Dorsolateral prefrontal cortex (tissue), 120 donors: ENCODE measurements at regions of chr10 and their contacts with region 1.

Region 1: GRCh38 chr10:5813287-5814109 is at the start of gene GDI2:
- DNase-seq: peak; percentile 91 to 98 (median 95)
- H3K4me3 ChIP-seq: peak within 1 kb of the TSS; percentile 64 to 99 (median 91)
- H3K27ac ChIP-seq: peak within 1 kb of the TSS; percentile 83 to 99 (median 95)
- H3K27me3 ChIP-seq: no peaks in the 10 kb centered on the region
- CTCF ChIP-seq: peak in 35 of 56 donors; percentile 5 to 52 (median 28)
- total RNA-seq, gene GDI2: 73.4 to 149 (median 121) TPM

Region 2: GRCh38 chr10:5629303-5630111 is 184.0 kb before region 1 on chr10:
- intact Hi-C with region 1: no loop called
- DNase-seq: peak; percentile 37 to 82 (median 72)
- H3K4me3 ChIP-seq: no peak overlapping the region
- H3K27ac ChIP-seq: no peak overlapping the region
- H3K27me3 ChIP-seq: no peaks in the 10 kb centered on the region
- CTCF ChIP-seq: peak; percentile 56 to 91 (median 80)

Region 3: DNA sequence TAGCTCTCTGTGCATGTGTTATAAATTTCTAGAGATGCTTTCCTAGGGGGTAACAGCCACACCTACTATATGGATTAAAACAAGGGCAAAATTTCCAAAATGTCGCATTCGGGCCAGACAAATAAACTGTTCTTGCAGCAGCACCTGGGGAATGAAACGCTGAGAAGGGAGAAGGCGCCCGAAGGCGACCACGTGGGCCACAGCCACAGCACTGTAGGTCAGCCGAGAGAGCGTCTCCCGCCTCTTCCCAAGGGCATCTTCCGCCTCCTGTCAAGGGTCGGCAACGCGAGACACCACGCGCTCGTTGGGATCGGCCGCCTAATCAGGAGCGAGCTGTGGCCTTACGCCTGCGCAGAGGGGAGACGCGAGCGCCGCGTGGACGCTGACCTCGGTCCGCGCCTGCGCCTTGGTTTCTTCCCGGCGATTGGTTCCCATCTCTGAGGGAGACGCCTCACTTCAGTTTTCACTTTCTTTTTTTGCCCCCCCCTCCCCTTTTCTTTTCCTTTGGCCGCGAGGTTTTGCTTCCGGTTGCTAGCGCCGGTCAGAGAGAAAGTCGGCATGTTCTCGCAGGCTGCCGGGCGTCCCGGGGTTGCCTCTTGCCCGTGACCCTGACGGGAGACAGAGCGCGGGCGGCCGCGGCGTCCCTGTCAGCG is 129.1 kb before region 1 on chr10 and contains the start of gene TASOR2:
- intact Hi-C with region 1: loop called in 1 of 2 experiments (anchors 2 kb)
- DNase-seq: peak; percentile 92 to 98 (median 95)
- H3K4me3 ChIP-seq: peak within 1 kb of the TSS; percentile 55 to 98 (median 90)
- H3K27ac ChIP-seq: peak within 1 kb of the TSS; percentile 9 to 93 (median 83)
- H3K27me3 ChIP-seq: no peaks in the 10 kb centered on the region
- CTCF ChIP-seq: peak in 41 of 56 donors; percentile 3 to 67 (median 33)
- total RNA-seq, gene TASOR2: 41.9 to 87.9 (median 67.5) TPM

Region 4: GRCh38 chr10:5692461-5693358 is 120.8 kb before region 1 on chr10:
- intact Hi-C with region 1: loop called in 1 of 2 experiments (anchors 5 kb)
- DNase-seq: peak in 9 of 10 donors; percentile 19 to 61 (median 31)
- H3K4me3 ChIP-seq: peak overlapping the region; percentile 48 to 84 (median 69)
- H3K27ac ChIP-seq: peak overlapping the region in 45 of 59 donors; percentile 13 to 81 (median 56)
- H3K27me3 ChIP-seq: no peaks in the 10 kb centered on the region
- CTCF ChIP-seq: peak in 2 of 56 donors; percentile 12 to 15

Region 5: DNA sequence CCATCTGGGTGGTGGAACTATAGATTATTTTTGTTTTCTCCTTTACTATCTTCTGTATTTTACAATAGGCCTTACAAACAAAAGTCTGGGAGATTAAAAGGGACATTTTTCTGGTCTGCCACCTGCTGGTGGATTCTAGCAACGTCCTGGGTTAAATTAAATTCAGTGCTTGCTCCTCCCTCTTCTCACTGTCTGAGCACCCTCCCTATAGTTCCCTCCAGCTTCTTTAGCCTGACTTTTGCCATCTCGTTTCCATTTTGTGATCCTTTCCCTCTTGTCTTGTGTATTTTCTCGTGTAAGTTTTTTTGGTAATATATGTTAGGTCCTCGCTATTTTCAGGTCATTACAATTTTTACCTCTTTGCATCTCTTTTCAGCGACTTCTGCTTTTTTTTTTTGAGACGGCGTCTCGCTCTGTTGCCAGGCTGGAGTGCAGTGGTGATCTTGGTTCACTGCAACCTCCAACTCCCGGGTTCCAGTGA is 60.1 kb after region 1 on chr10:
- intact Hi-C with region 1: loop called (anchors 1 to 5 kb)
- DNase-seq: peak in 8 of 10 donors; percentile 50 to 78 (median 60)
- H3K4me3 ChIP-seq: peak overlapping the region in 4 of 59 donors; percentile 7 to 30 (median 7)
- H3K27ac ChIP-seq: peak overlapping the region in 45 of 59 donors; percentile 2 to 81 (median 52)
- H3K27me3 ChIP-seq: no peaks in the 10 kb centered on the region
- CTCF ChIP-seq: peak; percentile 59 to 93 (median 83)

Region 6: DNA sequence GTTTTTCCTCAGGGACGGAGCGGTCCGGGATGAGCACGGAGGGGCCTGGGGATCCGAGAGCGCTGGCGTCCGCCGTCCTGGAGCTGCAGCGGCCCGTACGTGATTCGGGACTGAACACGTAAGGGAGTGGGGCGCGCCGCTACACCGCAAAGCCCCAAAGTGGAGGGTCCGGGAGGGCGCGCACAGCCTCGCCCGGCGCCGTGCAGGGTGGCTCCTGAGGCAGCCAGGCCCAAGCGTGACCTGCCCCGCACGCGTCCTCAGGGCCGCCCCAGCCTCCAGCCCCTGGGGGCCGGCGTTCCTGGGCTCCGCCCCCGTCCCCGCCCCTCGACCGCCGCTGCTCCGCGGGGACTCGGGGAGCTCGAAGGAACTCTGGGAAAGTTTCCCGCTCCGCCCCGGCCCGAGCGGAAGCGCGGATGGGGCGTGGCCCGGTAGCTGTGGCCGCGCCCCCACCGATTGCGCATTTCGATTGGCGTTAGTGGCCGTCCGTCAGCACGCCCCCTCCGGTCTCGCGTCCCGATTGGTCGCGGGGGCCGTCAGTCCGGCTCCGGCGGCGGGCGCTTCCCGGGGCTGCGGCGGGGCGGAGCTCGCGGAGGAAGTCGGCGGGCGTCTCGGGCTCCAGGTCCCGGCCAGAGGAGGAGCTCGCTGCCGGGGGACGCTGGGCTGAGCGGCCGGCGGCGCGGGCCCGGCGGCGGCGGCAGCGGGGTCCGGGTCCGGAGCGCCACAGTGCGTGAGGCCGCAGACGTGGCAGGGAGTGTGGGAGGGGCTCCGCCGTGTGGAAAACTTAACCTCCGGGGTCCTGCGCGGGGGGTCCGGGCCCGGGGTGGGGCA is 76.3 kb after region 1 on chr10 and contains the starts of genes ANKRD16 and FBH1:
- intact Hi-C with region 1: loop called (anchors 5 kb)
- DNase-seq: peak; percentile 94 to 99 (median 97)
- H3K4me3 ChIP-seq: peak within 1 kb of the TSS; percentile 63 to 97 (median 92)
- H3K27ac ChIP-seq: peak within 1 kb of the TSS in 53 of 59 donors; percentile 23 to 91 (median 76)
- H3K27me3 ChIP-seq: no peaks in the 10 kb centered on the region
- CTCF ChIP-seq: peak in 30 of 56 donors; percentile 7 to 56 (median 28)
- total RNA-seq, gene ANKRD16: 10.4 to 26.5 (median 18.4) TPM
- total RNA-seq, gene FBH1: 43.3 to 95.3 (median 62.7) TPM